ENCODE measurements at regions of chr1 and their contacts with region 1.

Region 1: DNA sequence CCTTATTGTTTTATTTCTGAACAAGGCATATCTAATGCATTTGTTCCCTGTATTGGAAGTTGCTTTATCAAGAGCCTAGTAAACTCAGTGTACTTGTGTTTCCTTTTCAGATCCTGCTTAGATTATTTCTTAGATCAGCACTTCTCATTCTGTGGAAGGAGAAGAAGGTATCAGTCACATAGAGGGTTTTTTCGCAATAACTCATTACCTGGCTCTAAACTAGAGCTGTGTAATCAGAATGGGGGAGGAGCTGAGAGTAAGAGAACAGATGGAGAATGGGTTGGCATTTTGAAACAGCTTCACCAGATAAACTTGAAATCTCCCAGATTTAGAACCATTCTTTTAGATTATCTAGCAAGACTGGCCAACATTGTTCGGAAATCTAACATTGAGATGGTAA is 11.0 kb downstream of the AHCYL1 start:
- DNase-seq: no peak
- H3K4me3 ChIP-seq: no peak overlapping the region
- H3K27ac ChIP-seq: peak overlapping the region; percentile 42
- H3K4me1 ChIP-seq: peaks cover 43% of the 10 kb centered on the region
- H3K27me3 ChIP-seq: no peaks in the 10 kb centered on the region
- CTCF ChIP-seq: no peak

Region 2: GRCh38 chr1:109613361-109614147 is 382.0 kb before region 1 on chr1:
- CTCF ChIA-PET with region 1: no interaction called
- POLR2A ChIA-PET with region 1: interaction called, 13 read pairs
- intact Hi-C with region 1: no loop called
- DNase-seq: no peak
- H3K4me3 ChIP-seq: no peak overlapping the region
- H3K27ac ChIP-seq: no peak overlapping the region
- H3K4me1 ChIP-seq: peaks cover 29% of the 10 kb centered on the region
- H3K27me3 ChIP-seq: no peaks in the 10 kb centered on the region
- CTCF ChIP-seq: no peak

Region 3: GRCh38 chr1:109630081-109630897 is 365.2 kb before region 1 on chr1:
- CTCF ChIA-PET with region 1: no interaction called
- POLR2A ChIA-PET with region 1: no interaction called
- intact Hi-C with region 1: no loop called
- DNase-seq: peak in 1 of 2 experiments; percentile 30
- H3K4me3 ChIP-seq: no peak overlapping the region
- H3K27ac ChIP-seq: no peak overlapping the region
- H3K4me1 ChIP-seq: no peaks in the 10 kb centered on the region
- H3K27me3 ChIP-seq: no peaks in the 10 kb centered on the region
- CTCF ChIP-seq: peak; percentile 43

Measured in PC-9 (cell line).